ENCODE measurements at regions of chr11 and their contacts with region 1.

Region 1: GRCh38 chr11:9757809-9758636 is 94.1 kb downstream of the SWAP70 start:
- DNase-seq: peak; percentile 97
- ATAC-seq: peak; percentile 47
- H3K4me3 Mint-ChIP-seq: peak overlapping the region; percentile 86
- H3K27ac Mint-ChIP-seq: peak overlapping the region; percentile 89
- H3K4me1 Mint-ChIP-seq: peaks cover 51% of the 10 kb centered on the region
- H3K27me3 Mint-ChIP-seq: no peaks in the 10 kb centered on the region

Region 2: GRCh38 chr11:9363954-9364912 is 393.8 kb before region 1 on chr11:
- CTCF ChIA-PET with region 1: no interaction called
- POLR2A ChIA-PET with region 1: no interaction called
- intact Hi-C with region 1: loop called in 1 of 2 experiments (anchors 5 kb)
- DNase-seq: peak; percentile 92
- ATAC-seq: peak; percentile 88
- H3K4me3 Mint-ChIP-seq: peak overlapping the region; percentile 62
- H3K27ac Mint-ChIP-seq: peak overlapping the region; percentile 88
- H3K4me1 Mint-ChIP-seq: peaks cover 30% of the 10 kb centered on the region
- H3K27me3 Mint-ChIP-seq: no peaks in the 10 kb centered on the region

Region 3: DNA sequence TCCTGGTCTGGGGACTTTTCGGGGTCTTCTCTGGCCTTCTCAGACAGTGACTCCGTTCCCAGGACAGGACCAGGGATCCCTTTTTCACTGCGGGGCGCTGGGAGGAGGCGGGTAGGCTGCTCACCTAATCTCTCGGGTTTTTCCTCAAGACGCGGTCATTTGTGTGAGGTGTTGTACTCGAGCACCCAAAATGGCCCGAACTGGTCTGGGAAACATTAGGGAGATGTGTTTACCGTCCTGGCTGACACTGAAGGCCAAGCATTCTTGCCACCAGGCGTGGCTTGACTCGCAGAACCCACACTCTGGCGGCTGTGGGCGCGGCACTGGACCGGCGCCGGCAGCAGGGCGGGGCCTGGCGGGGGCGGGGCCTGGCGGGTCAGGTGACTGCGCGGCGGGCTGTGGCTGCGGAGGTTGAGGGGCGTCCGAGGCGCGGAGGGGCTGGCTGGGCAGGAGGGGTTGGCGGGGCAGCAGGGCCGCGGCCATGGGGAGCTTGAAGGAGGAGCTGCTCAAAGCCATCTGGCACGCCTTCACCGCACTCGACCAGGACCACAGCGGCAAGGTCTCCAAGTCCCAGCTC is 94.2 kb before region 1 on chr11 and contains the start of gene SWAP70:
- CTCF ChIA-PET with region 1: no interaction called
- POLR2A ChIA-PET with region 1: no interaction called
- intact Hi-C with region 1: loop called in 1 of 2 experiments (anchors 2 kb)
- DNase-seq: peak; percentile 85
- ATAC-seq: peak; percentile 94
- H3K4me3 Mint-ChIP-seq: peak within 1 kb of the TSS; percentile 79
- H3K27ac Mint-ChIP-seq: peak within 1 kb of the TSS; percentile 42
- H3K4me1 Mint-ChIP-seq: peaks cover 11% of the 10 kb centered on the region
- H3K27me3 Mint-ChIP-seq: peaks cover 24% of the 10 kb centered on the region
- total RNA-seq, gene SWAP70: 7.5 to 9.7 TPM

Region 4: GRCh38 chr11:9972989-9973388 is 215.0 kb after region 1 on chr11:
- CTCF ChIA-PET with region 1: interaction called, 20 read pairs
- POLR2A ChIA-PET with region 1: no interaction called
- intact Hi-C with region 1: loop called (anchors 1 kb)
- DNase-seq: peak; percentile 37
- ATAC-seq: peak; percentile 78
- H3K4me3 Mint-ChIP-seq: no peak overlapping the region
- H3K27ac Mint-ChIP-seq: no peak overlapping the region
- H3K4me1 Mint-ChIP-seq: no peaks in the 10 kb centered on the region
- H3K27me3 Mint-ChIP-seq: no peaks in the 10 kb centered on the region

Region 5: DNA sequence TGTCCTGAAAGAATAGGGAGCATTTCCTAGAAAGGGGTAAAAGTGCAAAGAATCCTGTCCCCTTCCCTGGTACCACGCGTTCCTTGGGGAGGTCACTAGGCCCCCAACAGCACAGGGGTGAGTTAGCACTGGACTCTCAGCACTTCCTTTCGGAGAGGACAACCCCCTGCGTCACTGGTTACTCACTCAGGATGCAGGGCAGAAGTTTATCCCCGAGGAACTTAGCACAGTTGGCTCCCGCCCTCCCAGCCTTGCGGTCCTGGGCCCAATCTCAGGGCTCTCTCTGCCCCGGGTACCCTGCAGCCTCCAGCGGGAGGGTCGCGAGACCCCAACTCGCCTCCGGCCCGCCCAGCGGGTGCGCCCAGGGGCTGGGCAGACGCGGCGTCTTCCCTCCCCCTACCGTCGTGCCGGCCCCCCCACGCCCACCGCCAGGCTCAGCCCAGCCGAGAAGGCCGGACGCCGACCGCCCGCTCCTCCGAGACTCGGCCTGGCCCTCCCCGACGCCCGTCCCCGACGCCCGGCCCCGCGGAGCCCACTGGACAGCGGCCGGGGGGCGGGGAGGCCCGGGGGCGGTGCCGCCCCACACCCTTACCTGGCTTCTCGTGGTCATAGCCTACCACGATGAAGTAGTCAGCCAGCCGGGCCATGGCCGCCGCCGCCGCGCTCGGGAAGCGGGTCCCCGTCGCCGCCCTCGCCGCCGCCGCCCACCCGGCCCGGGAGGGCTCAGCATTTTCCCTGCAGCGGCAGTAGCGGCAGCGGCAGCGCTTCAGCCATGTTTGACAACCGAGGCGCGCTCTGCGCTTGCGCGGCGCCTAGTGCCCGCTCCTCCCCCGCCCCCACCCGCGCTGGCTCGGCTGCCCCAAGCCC is 535.6 kb after region 1 on chr11 and contains the start of gene SBF2:
- CTCF ChIA-PET with region 1: no interaction called
- POLR2A ChIA-PET with region 1: no interaction called
- intact Hi-C with region 1: loop called in 1 of 2 experiments (anchors 2 kb)
- DNase-seq: peak; percentile 89
- ATAC-seq: peak; percentile 69
- H3K4me3 Mint-ChIP-seq: peak within 1 kb of the TSS; percentile 69
- H3K27ac Mint-ChIP-seq: no peak within 1 kb of the TSS
- H3K4me1 Mint-ChIP-seq: peaks cover 37% of the 10 kb centered on the region
- H3K27me3 Mint-ChIP-seq: peaks cover 31% of the 10 kb centered on the region
- total RNA-seq, gene SBF2: 7.1 to 8.1 TPM

Region 6: GRCh38 chr11:10735481-10736475 is 977.8 kb after region 1 on chr11:
- CTCF ChIA-PET with region 1: no interaction called
- POLR2A ChIA-PET with region 1: no interaction called
- intact Hi-C with region 1: loop called in 1 of 2 experiments (anchors 5 kb)
- DNase-seq: peak; percentile 95
- ATAC-seq: peak; percentile 99
- H3K4me3 Mint-ChIP-seq: peak overlapping the region; percentile 11
- H3K27ac Mint-ChIP-seq: peak overlapping the region; percentile 2
- H3K4me1 Mint-ChIP-seq: peaks cover 10% of the 10 kb centered on the region
- H3K27me3 Mint-ChIP-seq: no peaks in the 10 kb centered on the region